ENCODE measurements at regions of chr10 and their contacts with region 1.

Region 1: GRCh38 chr10:9331583-9332008 is 1277.1 kb downstream of the GATA3 start:
- DNase-seq: no peak
- H3K4me3 Mint-ChIP-seq: no peak overlapping the region
- H3K27ac Mint-ChIP-seq: no peak overlapping the region
- H3K4me1 Mint-ChIP-seq: no peaks in the 10 kb centered on the region
- H3K27me3 Mint-ChIP-seq: peaks cover 20% of the 10 kb centered on the region

Region 2: DNA sequence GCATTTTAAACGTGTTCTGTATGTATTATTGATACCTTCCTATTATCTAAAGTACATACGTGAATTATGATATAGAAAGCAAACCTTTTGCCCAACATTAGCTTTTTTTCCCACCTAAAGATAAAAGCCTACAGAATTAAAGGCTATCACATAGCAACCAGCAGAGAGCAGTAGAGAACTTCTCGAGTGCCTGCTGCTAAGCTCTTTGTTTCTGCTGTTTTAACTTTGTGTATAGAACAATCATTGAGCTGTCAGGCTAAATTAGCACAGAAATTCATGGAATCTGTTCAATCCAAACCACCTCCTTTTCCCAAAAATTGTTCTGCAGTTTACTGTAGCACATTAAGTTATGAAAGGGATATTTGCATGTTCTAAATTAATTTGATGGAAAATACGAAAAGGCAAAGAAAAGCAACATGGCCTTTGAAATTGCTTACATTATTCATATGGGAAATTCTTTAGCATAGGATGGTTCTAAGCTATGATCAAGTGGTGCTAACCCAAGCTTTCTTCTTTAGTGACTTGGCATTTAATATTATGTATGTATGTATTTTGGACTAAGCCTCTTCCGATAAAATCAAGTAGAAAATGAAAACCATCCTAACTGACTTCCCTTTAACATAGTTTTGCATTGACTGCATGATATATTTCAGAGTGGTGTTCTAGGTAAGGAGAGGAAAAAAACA is 11.4 kb after region 1 on chr10:
- intact Hi-C with region 1: no loop called
- DNase-seq: no peak
- H3K4me3 Mint-ChIP-seq: no peak overlapping the region
- H3K27ac Mint-ChIP-seq: no peak overlapping the region
- H3K4me1 Mint-ChIP-seq: peaks cover 18% of the 10 kb centered on the region
- H3K27me3 Mint-ChIP-seq: peaks cover 20% of the 10 kb centered on the region

Region 3: GRCh38 chr10:10270126-10271050 is 938.8 kb after region 1 on chr10:
- intact Hi-C with region 1: no loop called
- DNase-seq: no peak
- H3K4me3 Mint-ChIP-seq: no peak overlapping the region
- H3K27ac Mint-ChIP-seq: no peak overlapping the region
- H3K4me1 Mint-ChIP-seq: no peaks in the 10 kb centered on the region
- H3K27me3 Mint-ChIP-seq: no peaks in the 10 kb centered on the region

Region 4: DNA sequence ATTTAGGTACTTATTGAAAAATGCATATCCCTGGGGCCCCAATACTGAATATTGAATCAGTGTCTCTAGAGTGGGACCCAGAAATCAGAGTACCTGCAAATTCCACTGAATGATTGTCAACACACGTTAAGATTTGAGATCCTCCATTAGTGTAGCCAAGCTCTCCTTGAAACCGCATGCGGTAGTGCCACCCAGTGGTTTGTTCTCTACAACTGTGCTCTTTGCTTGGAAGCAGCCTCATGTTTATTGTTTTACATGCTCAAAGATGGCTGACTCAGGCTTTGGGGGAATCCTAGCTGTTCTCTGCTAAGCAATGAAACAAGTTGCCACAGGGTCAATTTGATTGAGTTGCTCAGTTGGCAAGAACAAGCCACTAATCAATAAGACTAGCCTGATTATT is 1345.9 kb after region 1 on chr10:
- intact Hi-C with region 1: loop called (anchors 10 kb)
- DNase-seq: peak; percentile 11
- H3K4me3 Mint-ChIP-seq: no peak overlapping the region
- H3K27ac Mint-ChIP-seq: no peak overlapping the region
- H3K4me1 Mint-ChIP-seq: no peaks in the 10 kb centered on the region
- H3K27me3 Mint-ChIP-seq: peaks cover 1% of the 10 kb centered on the region